IMR-90 (cell line): ENCODE measurements at regions of chr2 and their contacts with region 1.

Region 1: DNA sequence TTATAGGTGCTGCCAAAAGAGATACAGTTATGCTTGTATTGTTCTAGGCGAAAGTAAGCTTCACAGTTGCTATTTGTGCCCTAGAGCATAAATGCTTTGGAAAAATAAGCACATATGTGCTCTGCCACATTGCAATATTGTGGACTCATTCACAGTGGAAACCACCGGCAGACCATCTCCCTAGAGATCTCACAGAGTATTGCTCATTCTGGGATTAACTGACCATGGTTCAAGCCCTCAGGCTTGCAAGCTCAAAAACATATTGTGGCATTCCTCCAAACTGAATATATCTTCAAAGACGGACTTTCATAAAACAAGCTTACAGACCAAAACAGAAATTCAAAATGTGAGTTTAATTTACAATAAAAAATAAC is 158.2 kb upstream of the CCDC150 start:
- DNase-seq: peak; percentile 56
- ATAC-seq: no peak
- H3K4me3 ChIP-seq: no peak overlapping the region
- H3K27ac ChIP-seq: no peak overlapping the region
- H3K4me1 ChIP-seq: no peaks in the 10 kb centered on the region
- H3K27me3 ChIP-seq: no peaks in the 10 kb centered on the region
- CTCF ChIP-seq: no peak
- POLR2A ChIP-seq: no peak
- RAD21 ChIP-seq: no peak

Region 2: GRCh38 chr2:196068271-196069209 is 412.8 kb before region 1 on chr2 and contains the start of gene DNAH7:
- CTCF ChIA-PET with region 1: no interaction called
- POLR2A ChIA-PET with region 1: no interaction called
- dilution Hi-C with region 1: no loop called
- in situ Hi-C with region 1: no loop called
- intact Hi-C with region 1: no loop called
- DNase-seq: peak; percentile 80
- ATAC-seq: peak; percentile 96
- H3K4me3 ChIP-seq: peak within 1 kb of the TSS; percentile 81
- H3K27ac ChIP-seq: peak within 1 kb of the TSS; percentile 38
- H3K4me1 ChIP-seq: no peaks in the 10 kb centered on the region
- H3K27me3 ChIP-seq: no peaks in the 10 kb centered on the region
- CTCF ChIP-seq: peak; percentile 27; the same call in 1 of the 2 replicates
- POLR2A ChIP-seq: peak; percentile 47; the same call in 1 of the 2 replicates
- RAD21 ChIP-seq: peak; percentile 14; the same call in 1 of the 2 replicates
- total RNA-seq, gene DNAH7: 0.28 and 0.36 TPM in 2 replicates

Region 3: GRCh38 chr2:196163285-196163684 is 318.0 kb before region 1 on chr2:
- CTCF ChIA-PET with region 1: no interaction called
- POLR2A ChIA-PET with region 1: interaction called, 27 read pairs
- dilution Hi-C with region 1: no loop called
- in situ Hi-C with region 1: no loop called
- intact Hi-C with region 1: no loop called
- DNase-seq: no peak
- ATAC-seq: no peak
- H3K4me3 ChIP-seq: no peak overlapping the region
- H3K27ac ChIP-seq: no peak overlapping the region
- H3K4me1 ChIP-seq: peaks cover 10% of the 10 kb centered on the region
- H3K27me3 ChIP-seq: no peaks in the 10 kb centered on the region
- CTCF ChIP-seq: no peak
- POLR2A ChIP-seq: no peak
- RAD21 ChIP-seq: no peak

Region 4: DNA sequence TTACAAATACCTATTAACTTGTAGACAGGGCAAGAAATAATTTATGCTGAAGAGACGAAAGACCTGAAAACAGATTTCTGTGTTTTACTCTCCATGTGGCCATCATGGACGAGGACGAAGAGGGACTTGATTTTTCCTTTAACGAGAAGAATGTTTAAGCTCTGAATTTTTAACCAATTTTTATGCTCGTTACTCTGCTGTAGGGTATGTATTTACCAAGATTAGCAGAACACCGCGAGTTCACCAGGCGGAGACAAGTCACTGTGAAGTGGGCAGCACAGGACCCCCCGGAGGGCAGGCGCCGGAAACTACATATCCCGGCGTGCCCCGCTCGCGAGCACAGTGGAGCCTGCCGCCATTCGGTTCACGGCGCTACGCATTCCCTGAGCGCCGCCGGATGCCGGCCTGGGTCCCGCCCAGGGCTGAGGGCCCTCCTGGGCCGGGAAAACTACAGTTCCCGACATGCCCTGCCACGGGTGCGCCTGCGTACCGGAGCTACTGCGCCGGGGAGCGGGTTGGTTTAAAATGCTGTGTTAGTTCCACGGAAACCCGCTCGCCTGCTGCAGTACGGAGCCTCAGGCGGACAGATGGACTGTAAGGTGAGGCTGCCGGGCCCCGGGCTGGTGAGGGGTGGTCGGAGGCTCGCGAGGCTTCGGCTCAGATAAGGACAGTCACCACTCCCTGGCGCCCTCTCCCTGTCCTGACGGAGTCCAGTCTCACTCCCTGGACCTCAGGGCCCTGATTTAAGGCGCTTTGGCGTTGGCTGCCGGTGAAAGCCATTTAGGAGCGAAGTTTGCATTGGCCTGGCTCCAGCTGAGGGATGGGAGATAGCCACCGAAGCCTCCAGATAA is 158.1 kb after region 1 on chr2 and contains the start of gene CCDC150:
- CTCF ChIA-PET with region 1: no interaction called
- POLR2A ChIA-PET with region 1: no interaction called
- dilution Hi-C with region 1: no loop called
- in situ Hi-C with region 1: no loop called
- intact Hi-C with region 1: no loop called
- DNase-seq: peak; percentile 91
- ATAC-seq: peak; percentile 100
- H3K4me3 ChIP-seq: peak within 1 kb of the TSS; percentile 93
- H3K27ac ChIP-seq: peak within 1 kb of the TSS; percentile 42; the same call in 1 of the 2 replicates
- H3K4me1 ChIP-seq: no peaks in the 10 kb centered on the region
- H3K27me3 ChIP-seq: no peaks in the 10 kb centered on the region
- CTCF ChIP-seq: peak; percentile 32
- POLR2A ChIP-seq: peak; percentile 61
- RAD21 ChIP-seq: peak; percentile 33
- total RNA-seq, gene CCDC150: 3.8 and 6.9 TPM in 2 replicates